GM18951 (cell line): ENCODE measurements at regions of chr5 and their contacts with region 1.

Region 1: GRCh38 chr5:135551593-135552447 is 16.1 kb upstream of the NEUROG1 start:
- POLR2A ChIP-seq: no peak

Region 2: DNA sequence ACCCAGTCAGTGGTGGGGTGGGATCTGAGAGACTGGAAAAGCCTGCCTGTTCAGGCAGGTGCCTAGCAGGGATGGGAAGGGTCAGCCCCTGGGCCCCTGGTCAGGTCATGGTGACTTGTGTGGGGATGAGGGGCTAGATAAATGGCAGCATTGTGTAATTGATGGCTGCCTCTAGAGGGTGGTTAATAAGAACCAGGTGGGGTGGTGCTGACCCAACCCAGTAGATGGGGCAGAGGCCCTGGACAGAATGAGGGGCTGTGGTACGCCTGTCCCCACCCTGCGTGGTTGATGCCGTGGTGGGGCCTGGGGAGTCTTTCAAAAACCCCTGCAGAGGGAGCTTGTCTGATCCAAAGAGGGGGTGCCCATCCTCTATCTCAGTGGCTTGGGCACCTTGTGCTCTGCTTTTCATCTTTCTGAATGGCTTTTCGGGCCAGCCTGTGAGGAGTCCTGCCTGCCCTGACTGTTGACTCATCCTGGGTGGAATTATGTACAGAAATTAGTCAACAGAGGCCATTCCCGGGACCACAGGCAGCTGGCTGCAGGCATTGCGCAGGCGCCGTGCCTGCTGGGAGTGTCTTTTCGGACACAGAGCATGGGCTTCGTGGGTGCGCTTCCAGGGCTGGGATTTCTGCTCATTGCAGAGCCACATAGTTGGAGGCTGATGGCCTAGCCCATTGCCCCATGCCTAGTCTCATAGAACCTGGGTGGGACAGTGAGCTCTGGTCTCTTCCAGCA is 424.1 kb before region 1 on chr5:
- in situ Hi-C with region 1: no loop called
- POLR2A ChIP-seq: no peak

Region 3: GRCh38 chr5:135466178-135467050 is 85.4 kb before region 1 on chr5:
- in situ Hi-C with region 1: loop called (anchors 10 kb)
- POLR2A ChIP-seq: no peak

Region 4: GRCh38 chr5:135641734-135642361 is 90.0 kb after region 1 on chr5:
- in situ Hi-C with region 1: no loop called
- POLR2A ChIP-seq: no peak